HEK293 (cell line): ENCODE measurements at regions of chr19 and their contacts with region 1.

Region 1: DNA sequence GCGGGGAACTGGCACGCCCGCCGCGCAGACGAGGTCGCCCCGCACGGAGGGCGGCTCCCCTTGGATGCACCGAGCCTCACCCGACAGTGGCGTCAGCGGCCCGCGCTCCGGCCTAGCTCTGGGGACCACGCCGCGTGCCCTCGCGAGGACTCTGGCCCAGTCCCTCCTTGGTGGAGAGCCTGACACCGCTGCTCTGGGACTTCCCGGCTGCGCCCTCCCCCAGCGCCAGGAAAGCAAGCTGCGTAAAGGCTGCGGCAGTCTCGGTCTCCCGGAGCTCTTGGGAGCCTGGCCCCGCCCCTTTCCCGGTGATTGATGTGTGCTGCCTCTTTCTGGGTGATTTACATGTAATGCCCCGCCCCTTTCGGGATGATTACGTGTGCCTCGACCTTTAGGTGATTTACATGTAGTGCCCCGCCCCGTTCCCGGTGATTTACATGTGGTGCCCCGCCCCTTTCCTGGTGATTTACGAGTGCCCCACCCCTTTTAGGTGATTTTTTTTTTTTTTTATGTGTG is at the start of gene LENG9:
- H3K4me3 ChIP-seq: peak within 1 kb of the TSS; percentile 90
- H3K27ac ChIP-seq: peak within 1 kb of the TSS; percentile 81
- H3K4me1 ChIP-seq: peaks cover 5% of the 10 kb centered on the region; the same call in 1 of the 2 replicates
- CTCF ChIP-seq: no peak

Region 2: GRCh38 chr19:54345938-54346386 is 117.6 kb before region 1 on chr19:
- CTCF ChIA-PET with region 1: no interaction called
- POLR2A ChIA-PET with region 1: no interaction called
- H3K4me3 ChIP-seq: no peak overlapping the region
- H3K27ac ChIP-seq: no peak overlapping the region
- H3K4me1 ChIP-seq: no peaks in the 10 kb centered on the region
- CTCF ChIP-seq: no peak

Region 3: GRCh38 chr19:54418030-54418929 is 45.3 kb before region 1 on chr19:
- CTCF ChIA-PET with region 1: no interaction called
- POLR2A ChIA-PET with region 1: no interaction called
- H3K4me3 ChIP-seq: no peak overlapping the region
- H3K27ac ChIP-seq: no peak overlapping the region
- H3K4me1 ChIP-seq: no peaks in the 10 kb centered on the region; the same call in 1 of the 2 replicates
- CTCF ChIP-seq: no peak

Region 4: DNA sequence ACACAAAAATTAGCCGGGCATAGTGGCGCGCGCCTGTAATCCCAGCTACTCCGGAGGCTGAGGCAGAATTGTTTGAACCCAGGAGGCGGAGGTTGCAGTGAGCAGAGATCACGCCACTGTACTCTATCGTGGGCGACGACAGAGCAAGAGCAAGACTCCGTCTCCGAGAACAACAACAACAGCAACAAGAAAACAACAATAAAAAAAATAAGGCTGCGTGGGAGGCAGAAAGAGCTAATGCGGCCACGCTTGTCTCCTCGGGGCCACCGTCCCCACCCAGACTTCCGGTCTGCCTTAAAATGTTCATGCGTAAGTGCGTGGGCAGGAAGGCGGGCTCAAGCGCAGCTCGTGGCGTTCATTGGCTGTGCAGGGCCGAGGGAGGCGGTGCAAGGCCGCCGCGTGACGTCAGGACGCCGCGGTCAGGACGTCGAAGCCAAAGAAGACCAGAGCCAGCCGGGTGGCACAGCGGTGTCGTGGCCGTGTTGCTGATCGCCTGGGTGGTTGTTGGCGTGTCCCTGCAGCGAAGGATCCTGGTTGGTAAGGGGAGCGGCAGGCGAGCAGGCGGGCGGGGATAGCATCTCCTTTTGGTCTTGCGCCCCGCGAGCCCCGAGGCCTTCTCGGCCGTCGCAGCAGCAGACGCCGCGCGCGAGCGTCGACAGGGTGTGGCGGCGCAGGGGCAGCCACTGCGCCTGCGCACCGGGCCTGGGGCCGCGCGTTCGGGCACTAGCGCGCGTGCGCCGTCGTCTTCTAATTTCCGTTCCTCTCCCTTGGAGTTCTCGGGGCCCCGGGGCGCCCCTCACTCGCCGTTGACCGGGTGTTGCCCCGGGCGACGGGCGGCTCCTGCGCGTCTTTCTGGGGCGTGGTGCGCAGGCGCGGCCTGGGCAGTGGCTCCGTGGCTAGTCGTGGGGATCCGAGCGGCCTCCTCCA is 14.6 kb before region 1 on chr19 and contains the start of gene LENG8:
- CTCF ChIA-PET with region 1: interaction called, 3 read pairs
- POLR2A ChIA-PET with region 1: interaction called, 64 read pairs
- H3K4me3 ChIP-seq: peak within 1 kb of the TSS; percentile 96
- H3K27ac ChIP-seq: peak within 1 kb of the TSS; percentile 90
- H3K4me1 ChIP-seq: peaks cover 29% of the 10 kb centered on the region
- CTCF ChIP-seq: peak; percentile 23; the same call in 1 of the 2 replicates